ENCODE measurements at regions of chr17 and their contacts with region 1.

Region 1: GRCh38 chr17:58417300-58418092 is at the start of gene RNF43:
- DNase-seq: peak; percentile 98
- ATAC-seq: peak; percentile 87
- H3K4me3 ChIP-seq: peak within 1 kb of the TSS; percentile 53
- H3K27ac ChIP-seq: peak within 1 kb of the TSS; percentile 70
- H3K4me1 ChIP-seq: peaks cover 5% of the 10 kb centered on the region; the same call in 1 of the 2 replicates
- H3K27me3 ChIP-seq: no peaks in the 10 kb centered on the region
- CTCF ChIP-seq: peak; percentile 90 to 92 (median 92)
- EP300 ChIP-seq: peak; percentile 68 to 90
- POLR2A ChIP-seq: no peak
- RAD21 ChIP-seq: peak; percentile 91
- polyA plus RNA-seq, gene RNF43: 1.2 to 1.3 TPM

Region 2: GRCh38 chr17:58303971-58304725 is 113.3 kb before region 1 on chr17:
- CTCF ChIA-PET with region 1: interaction called, 17 read pairs
- POLR2A ChIA-PET with region 1: interaction called, 5 read pairs
- RAD21 ChIA-PET with region 1: interaction called, 5 read pairs
- SMC1A ChIA-PET with region 1: interaction called, 4 read pairs
- in situ Hi-C with region 1: no loop called
- intact Hi-C with region 1: no loop called
- DNase-seq: no peak
- ATAC-seq: peak; percentile 95
- H3K4me3 ChIP-seq: no peak overlapping the region
- H3K27ac ChIP-seq: no peak overlapping the region
- H3K4me1 ChIP-seq: no peaks in the 10 kb centered on the region
- H3K27me3 ChIP-seq: no peaks in the 10 kb centered on the region; a peak in 1 of 4 replicates
- CTCF ChIP-seq: peak; percentile 79 to 96 (median 96)
- EP300 ChIP-seq: no peak
- POLR2A ChIP-seq: no peak
- RAD21 ChIP-seq: peak; percentile 67

Region 3: GRCh38 chr17:58329035-58329809 is 88.3 kb before region 1 on chr17:
- CTCF ChIA-PET with region 1: interaction called, 28 read pairs
- POLR2A ChIA-PET with region 1: interaction called, 373 read pairs
- RAD21 ChIA-PET with region 1: interaction called, 323 read pairs
- SMC1A ChIA-PET with region 1: interaction called, 8 read pairs
- in situ Hi-C with region 1: no loop called
- intact Hi-C with region 1: no loop called
- DNase-seq: peak; percentile 97
- ATAC-seq: peak; percentile 51
- H3K4me3 ChIP-seq: peak overlapping the region; percentile 56; the same call in 1 of the 2 replicates
- H3K27ac ChIP-seq: peak overlapping the region; percentile 60
- H3K4me1 ChIP-seq: peaks cover 22% of the 10 kb centered on the region
- H3K27me3 ChIP-seq: no peaks in the 10 kb centered on the region; a peak in 1 of 4 replicates
- CTCF ChIP-seq: peak in 2 of 3 experiments; percentile 75 to 79; a peak in 4 of 6 replicates
- EP300 ChIP-seq: 0 out of 4 replicates have a peak, but pooled peaks of 1 of the 2 experiments have one; percentile 7
- POLR2A ChIP-seq: no peak
- RAD21 ChIP-seq: peak; percentile 44

Region 4: GRCh38 chr17:58344047-58344790 is 73.3 kb before region 1 on chr17:
- CTCF ChIA-PET with region 1: interaction called, 102 read pairs
- POLR2A ChIA-PET with region 1: interaction called, 373 read pairs
- RAD21 ChIA-PET with region 1: interaction called, 323 read pairs
- SMC1A ChIA-PET with region 1: interaction called, 195 read pairs
- in situ Hi-C with region 1: no loop called
- intact Hi-C with region 1: loop called (anchors 2 kb)
- DNase-seq: peak; percentile 98
- ATAC-seq: peak; percentile 76
- H3K4me3 ChIP-seq: peak overlapping the region; percentile 81
- H3K27ac ChIP-seq: peak overlapping the region; percentile 100
- H3K4me1 ChIP-seq: peaks cover 53% of the 10 kb centered on the region
- H3K27me3 ChIP-seq: no peaks in the 10 kb centered on the region
- CTCF ChIP-seq: no peak
- EP300 ChIP-seq: peak; percentile 85 to 96
- POLR2A ChIP-seq: peak; percentile 79
- RAD21 ChIP-seq: peak; percentile 28; the same call in 1 of the 2 replicates

Region 5: DNA sequence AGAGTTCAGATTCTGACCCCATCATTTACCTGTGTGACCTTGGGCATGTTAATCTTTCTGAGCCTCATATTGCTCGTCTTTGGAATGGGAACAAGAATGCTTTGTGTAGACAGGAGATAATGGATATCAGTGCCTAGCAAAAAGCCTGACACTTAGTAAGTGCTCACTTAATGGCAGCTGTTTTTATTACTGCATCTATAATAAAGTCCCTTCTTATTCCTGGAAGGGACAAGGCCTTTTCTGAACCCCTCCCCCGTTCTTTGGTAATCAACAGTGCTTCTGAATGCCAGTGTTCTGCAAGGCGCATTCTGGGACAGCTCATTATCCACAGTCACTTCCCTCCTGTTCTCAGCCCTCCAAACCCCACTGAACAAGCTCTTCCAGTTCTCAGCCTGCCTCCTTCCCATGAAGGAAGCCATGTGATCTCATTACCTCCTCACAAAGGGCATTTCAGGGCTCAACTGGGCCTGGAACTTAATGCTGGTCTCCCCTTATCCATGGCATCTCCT is 40.3 kb before region 1 on chr17:
- CTCF ChIA-PET with region 1: interaction called, 17 read pairs
- POLR2A ChIA-PET with region 1: interaction called, 16 read pairs
- RAD21 ChIA-PET with region 1: interaction called, 70 read pairs
- SMC1A ChIA-PET with region 1: interaction called, 74 read pairs
- in situ Hi-C with region 1: no loop called
- intact Hi-C with region 1: loop called (anchors 2 kb)
- DNase-seq: no peak
- ATAC-seq: no peak
- H3K4me3 ChIP-seq: no peak overlapping the region
- H3K27ac ChIP-seq: no peak overlapping the region
- H3K4me1 ChIP-seq: peaks cover 5% of the 10 kb centered on the region; the same call in 1 of the 2 replicates
- H3K27me3 ChIP-seq: no peaks in the 10 kb centered on the region
- CTCF ChIP-seq: no peak
- EP300 ChIP-seq: no peak
- POLR2A ChIP-seq: no peak
- RAD21 ChIP-seq: no peak

Region 6: DNA sequence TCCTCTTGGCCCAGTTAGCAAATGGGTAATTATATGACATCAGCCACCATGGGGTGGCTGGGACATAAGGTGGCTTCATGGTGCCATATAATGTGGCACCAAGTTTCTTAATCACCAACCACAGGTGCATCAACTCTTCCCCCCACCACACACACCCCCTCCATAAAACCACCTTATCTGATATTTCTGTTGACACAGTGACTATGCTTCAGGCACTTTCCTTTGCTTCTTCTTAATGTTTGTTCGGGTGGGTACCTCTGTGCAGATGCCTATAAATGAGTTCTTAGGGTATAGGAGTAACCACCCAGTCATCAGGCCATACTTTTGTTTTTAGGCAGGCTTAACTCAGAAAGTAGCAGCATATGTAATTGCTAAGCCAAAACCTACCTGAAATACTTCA is 29.7 kb before region 1 on chr17:
- CTCF ChIA-PET with region 1: interaction called, 17 read pairs
- POLR2A ChIA-PET with region 1: interaction called, 16 read pairs
- RAD21 ChIA-PET with region 1: interaction called, 70 read pairs
- SMC1A ChIA-PET with region 1: interaction called, 74 read pairs
- in situ Hi-C with region 1: no loop called
- intact Hi-C with region 1: loop called (anchors 2 kb)
- DNase-seq: no peak
- ATAC-seq: no peak
- H3K4me3 ChIP-seq: no peak overlapping the region
- H3K27ac ChIP-seq: no peak overlapping the region
- H3K4me1 ChIP-seq: peaks cover 9% of the 10 kb centered on the region
- H3K27me3 ChIP-seq: no peaks in the 10 kb centered on the region
- CTCF ChIP-seq: no peak
- EP300 ChIP-seq: no peak
- POLR2A ChIP-seq: no peak
- RAD21 ChIP-seq: no peak

Region 7: GRCh38 chr17:58427807-58428206 is 10.3 kb after region 1 on chr17:
- CTCF ChIA-PET with region 1: interaction called, 30 read pairs
- POLR2A ChIA-PET with region 1: interaction called, 14 read pairs
- RAD21 ChIA-PET with region 1: interaction called, 10 read pairs
- SMC1A ChIA-PET with region 1: interaction called, 15 read pairs
- in situ Hi-C with region 1: no loop called
- intact Hi-C with region 1: no loop called
- DNase-seq: no peak
- ATAC-seq: no peak
- H3K4me3 ChIP-seq: no peak overlapping the region
- H3K27ac ChIP-seq: no peak overlapping the region
- H3K4me1 ChIP-seq: no peaks in the 10 kb centered on the region; the same call in 1 of the 2 replicates
- H3K27me3 ChIP-seq: no peaks in the 10 kb centered on the region
- CTCF ChIP-seq: no peak
- EP300 ChIP-seq: no peak
- POLR2A ChIP-seq: no peak
- RAD21 ChIP-seq: no peak